Caco-2 (cell line): ENCODE measurements at regions of chrX and their contacts with region 1.

Region 1: DNA sequence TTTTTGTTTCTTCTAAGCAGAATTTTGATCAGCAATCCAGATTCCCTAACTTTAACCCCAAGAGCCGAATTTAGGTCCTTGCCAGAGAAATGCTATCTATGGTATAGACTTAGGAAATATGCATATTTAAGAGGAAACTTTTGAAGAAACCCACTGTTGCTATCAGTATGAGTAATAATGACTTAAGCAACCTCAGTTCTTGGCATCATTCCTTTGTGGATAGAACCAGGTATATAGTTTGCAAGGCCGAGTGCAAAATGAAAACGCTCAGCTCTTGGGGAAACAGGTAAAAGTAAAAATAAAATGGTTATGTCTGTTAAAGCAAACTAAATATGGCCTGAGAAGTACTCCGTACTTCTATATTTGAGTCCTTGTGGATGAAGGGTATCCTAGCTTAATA is 78.1 kb downstream of the ARSF start:
- DNase-seq: no peak
- H3K4me3 ChIP-seq: no peak overlapping the region
- H3K4me3 Mint-ChIP-seq: no peak overlapping the region
- H3K27ac Mint-ChIP-seq: no peak overlapping the region
- H3K4me1 ChIP-seq: no peaks in the 10 kb centered on the region
- H3K4me1 Mint-ChIP-seq: no peaks in the 10 kb centered on the region
- H3K27me3 ChIP-seq: no peaks in the 10 kb centered on the region
- H3K27me3 Mint-ChIP-seq: no peaks in the 10 kb centered on the region
- CTCF ChIP-seq: no peak

Region 2: DNA sequence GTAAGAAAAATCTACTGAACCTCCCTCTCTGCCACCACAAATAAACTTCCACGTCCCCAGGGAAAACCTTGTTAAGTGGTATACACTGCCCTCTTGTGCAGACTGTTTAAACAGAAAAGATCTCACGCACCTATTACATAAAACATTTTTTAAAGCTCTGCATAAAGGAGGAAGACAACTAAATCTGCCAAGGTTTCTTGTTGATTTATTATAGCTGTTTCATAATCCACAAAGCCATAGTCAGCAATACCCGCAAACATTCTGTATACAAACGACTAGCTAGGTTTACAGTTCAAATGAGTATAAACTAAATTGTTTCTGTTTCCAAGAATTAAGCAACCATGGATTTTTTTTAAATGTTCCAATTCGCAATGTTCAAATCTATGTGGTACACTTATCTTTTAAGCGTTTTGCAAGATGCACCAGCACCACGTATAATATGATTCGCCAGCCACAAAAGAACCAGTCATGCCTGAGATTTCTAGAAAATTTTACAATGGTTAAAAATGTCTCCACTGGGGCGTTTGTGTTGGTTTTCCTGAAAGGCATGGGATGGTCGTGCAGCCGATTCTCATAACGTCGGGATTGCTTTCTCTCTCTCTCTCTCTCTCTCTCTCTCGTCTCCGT is 429.5 kb after region 1 on chrX:
- CTCF ChIA-PET with region 1: no interaction called
- POLR2A ChIA-PET with region 1: no interaction called
- intact Hi-C with region 1: loop called (anchors 5 kb)
- DNase-seq: no peak
- H3K4me3 ChIP-seq: peak overlapping the region; percentile 2
- H3K4me3 Mint-ChIP-seq: peak overlapping the region; percentile 77
- H3K27ac Mint-ChIP-seq: no peak overlapping the region
- H3K4me1 ChIP-seq: no peaks in the 10 kb centered on the region; the same call in 1 of the 2 replicates
- H3K4me1 Mint-ChIP-seq: peaks cover 11% of the 10 kb centered on the region
- H3K27me3 ChIP-seq: no peaks in the 10 kb centered on the region
- H3K27me3 Mint-ChIP-seq: no peaks in the 10 kb centered on the region
- CTCF ChIP-seq: peak in 1 of 2 experiments; percentile 13